ENCODE measurements at regions of chr1 and their contacts with region 1.

Region 1: GRCh38 chr1:23169727-23170335 is 1.2 kb upstream of the LUZP1 start:
- DNase-seq: no peak
- CTCF ChIP-seq: no peak

Region 2: DNA sequence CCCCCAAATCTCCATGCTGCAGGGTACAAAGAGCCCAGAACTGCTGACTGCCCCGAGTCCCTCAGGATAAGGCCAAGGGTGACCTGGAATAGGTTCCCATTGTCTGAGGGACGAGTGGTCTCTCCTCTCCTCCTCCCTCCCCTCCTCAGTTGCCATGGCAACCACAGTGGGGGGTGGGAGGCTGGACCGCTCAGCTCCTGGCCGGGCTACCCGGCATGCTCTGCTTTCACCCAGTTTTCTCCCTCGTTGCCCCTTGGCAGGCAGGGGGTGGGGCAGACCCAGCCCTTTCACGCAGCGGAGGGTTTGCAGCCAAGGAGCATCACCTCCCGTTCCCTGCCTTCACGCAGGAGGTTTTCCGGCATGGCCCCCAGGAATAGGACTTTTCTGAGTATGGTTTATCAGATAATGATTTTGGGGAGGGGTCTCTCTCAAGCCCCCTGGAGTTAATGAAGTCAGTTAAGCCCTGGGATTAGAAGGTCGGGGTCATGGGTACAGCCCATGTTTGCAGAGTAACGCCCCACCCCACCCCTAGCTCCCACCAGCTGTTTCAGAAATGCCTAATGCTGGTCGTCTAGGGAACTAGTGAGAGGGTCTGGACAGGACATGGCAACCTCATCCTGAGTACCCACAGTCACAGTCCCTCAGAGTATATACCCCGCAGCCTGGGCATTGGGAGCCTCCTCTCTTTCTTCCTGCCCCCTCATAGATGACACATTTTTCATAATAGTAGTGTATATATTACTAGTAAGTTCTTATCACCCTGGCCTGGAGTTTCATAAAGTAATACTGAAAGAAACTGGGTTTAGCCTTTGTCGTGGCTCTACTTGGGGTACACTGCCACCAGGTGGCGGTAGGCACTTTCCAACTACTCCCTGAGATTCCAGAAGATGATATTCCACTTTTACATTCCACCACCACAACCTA is 496.1 kb before region 1 on chr1:
- in situ Hi-C with region 1: no loop called
- DNase-seq: peak; percentile 67
- CTCF ChIP-seq: peak; percentile 67

Region 3: GRCh38 chr1:22739648-22740385 is 430.0 kb before region 1 on chr1:
- in situ Hi-C with region 1: no loop called
- DNase-seq: no peak
- CTCF ChIP-seq: no peak

Region 4: GRCh38 chr1:23118957-23119792 is 50.7 kb before region 1 on chr1:
- in situ Hi-C with region 1: loop called (anchors 5 kb)
- DNase-seq: no peak
- CTCF ChIP-seq: no peak